ENCODE measurements at regions of chr3 and their contacts with region 1.

Region 1: GRCh38 chr3:194364652-194365434 is 4.7 kb downstream of the LRRC15 start:
- DNase-seq: no peak
- H3K4me3 ChIP-seq: no peak overlapping the region
- H3K27ac ChIP-seq: no peak overlapping the region
- H3K4me1 ChIP-seq: peaks cover 2 to 15% (median 9%) of the 10 kb centered on the region in 4 experiments
- H3K27me3 ChIP-seq: peaks cover 0 to 8% (median 3%) of the 10 kb centered on the region in 4 experiments; a peak in 4 of 7 replicates
- CTCF ChIP-seq: no peak
- EP300 ChIP-seq: no peak
- POLR2A ChIP-seq: no peak
- RAD21 ChIP-seq: no peak

Region 2: GRCh38 chr3:194374935-194375334 is 10.1 kb after region 1 on chr3:
- CTCF ChIA-PET with region 1: no interaction called
- POLR2A ChIA-PET with region 1: no interaction called
- DNase-seq: no peak
- H3K4me3 ChIP-seq: no peak overlapping the region
- H3K27ac ChIP-seq: no peak overlapping the region
- H3K4me1 ChIP-seq: peaks cover 0 to 22% (median 6%) of the 10 kb centered on the region in 4 experiments; a peak in 5 of 7 replicates
- H3K27me3 ChIP-seq: peaks cover 0 to 2% (median 0%) of the 10 kb centered on the region in 4 experiments; a peak in 1 of 7 replicates
- CTCF ChIP-seq: no peak
- EP300 ChIP-seq: no peak
- POLR2A ChIP-seq: no peak
- RAD21 ChIP-seq: no peak

Region 3: GRCh38 chr3:194404365-194405140 is 39.7 kb after region 1 on chr3:
- CTCF ChIA-PET with region 1: interaction called, 12 read pairs
- POLR2A ChIA-PET with region 1: no interaction called
- DNase-seq: no peak
- H3K4me3 ChIP-seq: no peak overlapping the region
- H3K27ac ChIP-seq: no peak overlapping the region
- H3K4me1 ChIP-seq: no peaks in the 10 kb centered on the region
- H3K27me3 ChIP-seq: no peaks in the 10 kb centered on the region
- CTCF ChIP-seq: peak in 2 of 3 experiments; percentile 41 to 52; a peak in 2 of 4 replicates
- EP300 ChIP-seq: no peak
- POLR2A ChIP-seq: no peak
- RAD21 ChIP-seq: peak; percentile 68 to 77